Activated CD8-positive, alpha-beta T cell treated with anti-CD3 and anti-CD28 coated beads for 36 hours (primary cell): ENCODE measurements at regions of chr1 and their contacts with region 1.

Region 1: DNA sequence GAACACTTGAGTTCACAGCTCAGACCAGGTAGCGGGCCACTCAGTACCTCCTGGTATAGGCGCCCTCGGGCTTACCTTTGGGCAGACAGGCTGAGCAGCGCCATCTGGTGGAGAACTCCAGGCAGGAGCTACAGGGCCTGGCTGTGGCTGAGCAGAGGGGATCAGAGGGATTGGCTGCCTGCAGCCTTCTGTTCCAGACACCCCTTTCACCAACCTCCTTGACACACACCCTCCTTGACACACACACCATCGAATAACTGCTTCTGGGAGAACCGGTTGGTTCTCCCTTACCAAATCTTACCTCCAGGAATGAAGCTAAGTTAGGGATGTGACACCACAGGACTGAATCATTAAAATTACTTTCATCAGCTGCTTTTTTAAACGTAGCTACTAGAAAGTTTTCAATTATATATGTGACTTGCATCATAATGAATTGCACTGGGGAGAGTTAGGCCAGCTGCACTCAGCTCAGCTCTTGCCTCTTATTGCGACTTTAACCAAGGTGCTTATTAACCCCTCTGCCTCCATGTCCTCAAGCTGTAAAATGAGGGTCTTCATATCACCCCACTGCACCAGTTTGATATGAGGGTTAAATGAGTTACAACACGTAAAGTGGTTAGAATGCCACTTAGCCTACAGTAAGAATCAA is 6.6 kb downstream of the LIN28A start:
- DNase-seq: peak; percentile 93
- ATAC-seq: peak; percentile 100
- H3K4me3 Mint-ChIP-seq: no peak overlapping the region
- H3K27ac Mint-ChIP-seq: no peak overlapping the region
- H3K4me1 Mint-ChIP-seq: no peaks in the 10 kb centered on the region
- H3K27me3 Mint-ChIP-seq: peaks cover 24% of the 10 kb centered on the region
- CTCF ChIP-seq: peak; percentile 82

Region 2: DNA sequence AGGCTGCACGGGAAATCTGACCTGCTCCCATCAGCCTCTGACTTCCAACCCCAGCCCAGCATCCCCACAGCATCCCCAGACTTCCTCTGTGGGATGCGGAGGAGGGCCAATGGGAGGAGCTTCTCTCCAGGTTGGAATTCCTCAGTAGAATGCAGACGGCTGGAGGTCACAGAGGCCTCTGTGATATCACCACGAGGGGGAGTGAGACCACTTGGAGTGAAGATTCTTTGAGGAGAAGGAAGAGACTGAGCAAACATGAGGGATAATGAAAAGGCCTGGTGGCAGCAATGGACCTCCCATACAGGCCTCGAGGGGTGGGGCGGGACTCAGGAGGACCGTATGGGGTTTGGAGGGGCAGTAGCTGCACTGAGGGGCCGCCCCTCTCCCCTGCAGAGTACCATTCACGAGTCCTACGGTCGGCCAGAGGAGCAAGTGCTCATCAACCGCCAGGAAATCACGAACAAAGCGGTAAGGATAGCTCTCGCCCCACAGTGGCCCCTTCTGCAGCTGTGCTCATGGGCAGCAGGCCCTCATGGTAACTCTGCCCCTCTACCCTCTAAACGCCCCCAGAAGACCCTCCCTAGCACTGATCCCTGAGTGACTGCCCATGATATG is 226.8 kb before region 1 on chr1 and contains the start of gene CATSPER4:
- CTCF ChIA-PET with region 1: interaction called, 10 read pairs
- POLR2A ChIA-PET with region 1: no interaction called
- intact Hi-C with region 1: no loop called
- DNase-seq: no peak
- ATAC-seq: no peak
- H3K4me3 Mint-ChIP-seq: no peak within 1 kb of the TSS
- H3K27ac Mint-ChIP-seq: peak within 1 kb of the TSS; percentile 19
- H3K4me1 Mint-ChIP-seq: peaks cover 6% of the 10 kb centered on the region
- H3K27me3 Mint-ChIP-seq: no peaks in the 10 kb centered on the region
- CTCF ChIP-seq: no peak
- total RNA-seq, gene CATSPER4: not detected

Region 3: DNA sequence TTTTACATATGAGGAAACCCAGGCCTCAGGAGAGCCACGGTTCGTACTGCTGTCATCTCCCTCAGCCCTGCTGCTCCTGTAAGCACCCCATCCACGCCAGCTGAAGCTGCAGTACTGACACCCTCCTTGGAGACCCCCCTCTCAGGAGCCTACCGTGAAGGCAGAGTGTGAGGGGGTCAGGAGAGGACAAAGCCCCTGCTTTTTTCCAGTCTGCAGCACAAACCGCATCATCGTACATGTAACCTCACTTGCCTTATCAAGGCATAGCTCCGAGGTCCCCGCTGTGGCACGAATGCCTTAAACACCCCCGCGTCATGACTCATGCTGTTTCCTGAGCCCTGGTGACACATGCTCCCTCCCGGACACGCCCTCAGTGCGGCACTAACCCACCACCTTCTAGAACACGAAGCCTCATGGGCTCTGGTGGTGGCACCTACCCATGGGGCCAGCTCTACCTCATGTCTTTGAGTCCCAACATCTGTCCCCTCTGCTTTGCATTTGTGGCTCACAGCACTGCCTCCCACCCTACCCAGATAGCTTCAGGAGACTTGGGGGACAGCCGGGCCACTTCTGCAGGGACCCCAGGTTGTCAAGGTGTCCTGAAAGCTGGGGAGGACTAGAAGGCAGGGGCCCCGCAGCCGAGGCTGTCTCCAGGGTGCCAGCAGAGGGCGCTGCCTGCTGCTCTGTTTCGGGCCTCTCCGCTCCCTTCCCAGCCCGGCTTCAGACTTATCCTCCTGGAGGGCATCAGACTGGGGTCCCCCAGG is 132.5 kb before region 1 on chr1:
- CTCF ChIA-PET with region 1: interaction called, 18 read pairs
- POLR2A ChIA-PET with region 1: no interaction called
- intact Hi-C with region 1: no loop called
- DNase-seq: peak; percentile 100
- ATAC-seq: peak; percentile 61
- H3K4me3 Mint-ChIP-seq: peak overlapping the region; percentile 88
- H3K27ac Mint-ChIP-seq: peak overlapping the region; percentile 99
- H3K4me1 Mint-ChIP-seq: peaks cover 85% of the 10 kb centered on the region
- H3K27me3 Mint-ChIP-seq: no peaks in the 10 kb centered on the region
- CTCF ChIP-seq: peak; percentile 72

Region 4: DNA sequence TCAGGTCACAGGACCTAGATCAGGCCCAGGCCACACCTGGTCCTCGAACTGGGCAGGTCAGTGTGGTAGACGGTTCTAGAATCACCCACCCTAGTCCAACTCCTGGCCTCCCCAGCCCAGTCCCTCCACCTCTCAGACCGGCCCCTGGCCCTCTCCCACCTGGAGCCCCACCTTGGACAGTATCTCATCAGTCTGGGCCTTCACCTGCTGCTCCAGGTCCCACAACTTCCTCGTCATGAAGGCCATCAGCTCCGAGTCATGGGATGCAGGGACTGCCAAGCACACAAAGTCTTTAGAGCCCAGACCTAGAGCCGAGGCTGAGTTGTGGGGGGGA is 119.5 kb before region 1 on chr1:
- CTCF ChIA-PET with region 1: no interaction called
- POLR2A ChIA-PET with region 1: no interaction called
- intact Hi-C with region 1: no loop called
- DNase-seq: no peak
- ATAC-seq: no peak
- H3K4me3 Mint-ChIP-seq: no peak overlapping the region
- H3K27ac Mint-ChIP-seq: no peak overlapping the region
- H3K4me1 Mint-ChIP-seq: peaks cover 3% of the 10 kb centered on the region
- H3K27me3 Mint-ChIP-seq: no peaks in the 10 kb centered on the region
- CTCF ChIP-seq: no peak

Region 5: DNA sequence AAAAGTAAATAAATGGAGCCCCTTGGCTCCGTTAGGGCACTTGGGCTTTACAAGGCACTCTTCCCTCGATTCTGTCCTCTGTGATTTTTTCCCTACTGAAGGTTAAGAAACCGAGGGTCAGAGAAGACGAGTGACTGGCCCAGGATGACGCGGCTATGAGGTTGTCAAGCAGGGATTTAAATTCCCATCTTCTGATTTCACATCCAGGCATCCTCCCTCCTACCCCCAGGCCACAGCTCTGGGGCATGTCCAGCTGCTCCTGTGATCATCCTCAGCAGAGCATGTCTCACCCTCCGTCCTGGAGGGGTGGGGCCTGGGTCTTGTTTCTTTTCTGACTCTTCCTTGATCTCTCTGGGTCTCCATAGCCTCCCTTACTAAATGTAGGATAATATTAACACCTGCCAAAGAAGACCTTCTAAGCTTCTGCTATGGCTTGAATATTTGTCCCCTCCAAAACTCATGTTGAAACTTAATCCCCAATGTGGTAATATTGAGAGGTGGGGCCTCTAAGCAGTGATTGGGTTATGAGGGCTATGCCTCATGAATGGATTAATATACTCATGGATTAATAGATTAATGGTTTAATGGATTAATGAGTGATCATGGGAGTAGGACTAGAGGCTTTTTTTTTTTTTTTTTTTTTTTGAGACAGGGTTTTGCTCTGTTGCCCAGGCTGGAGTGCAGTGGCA is 67.9 kb before region 1 on chr1:
- CTCF ChIA-PET with region 1: interaction called, 19 read pairs
- POLR2A ChIA-PET with region 1: interaction called, 3 read pairs
- intact Hi-C with region 1: no loop called
- DNase-seq: no peak
- ATAC-seq: no peak
- H3K4me3 Mint-ChIP-seq: no peak overlapping the region
- H3K27ac Mint-ChIP-seq: no peak overlapping the region
- H3K4me1 Mint-ChIP-seq: no peaks in the 10 kb centered on the region
- H3K27me3 Mint-ChIP-seq: no peaks in the 10 kb centered on the region
- CTCF ChIP-seq: no peak

Region 6: DNA sequence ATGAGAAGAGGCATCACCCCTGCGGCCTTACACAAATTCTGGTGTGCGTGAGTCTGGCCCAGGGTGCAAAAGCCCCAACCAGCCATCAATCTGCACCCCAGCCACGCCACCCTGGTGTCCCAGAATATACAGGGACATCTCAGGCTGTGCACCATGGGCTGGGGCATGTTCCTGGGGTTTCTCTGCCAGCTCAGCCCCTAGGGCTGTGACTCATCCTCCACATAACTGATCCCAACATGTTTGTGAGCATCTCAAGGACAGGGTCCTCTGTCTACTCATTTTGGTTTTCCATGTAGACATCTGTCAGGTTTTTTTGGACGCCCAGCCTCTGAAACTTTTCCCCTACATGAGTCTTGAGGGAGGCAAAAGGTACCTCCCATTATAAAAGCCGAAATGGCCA is 45.2 kb before region 1 on chr1:
- CTCF ChIA-PET with region 1: interaction called, 24 read pairs
- POLR2A ChIA-PET with region 1: interaction called, 3 read pairs
- intact Hi-C with region 1: no loop called
- DNase-seq: peak; percentile 31
- ATAC-seq: no peak
- H3K4me3 Mint-ChIP-seq: no peak overlapping the region
- H3K27ac Mint-ChIP-seq: peak overlapping the region; percentile 4
- H3K4me1 Mint-ChIP-seq: peaks cover 72% of the 10 kb centered on the region
- H3K27me3 Mint-ChIP-seq: no peaks in the 10 kb centered on the region
- CTCF ChIP-seq: no peak

Region 7: GRCh38 chr1:26401891-26402290 is 15.3 kb before region 1 on chr1:
- CTCF ChIA-PET with region 1: interaction called, 31 read pairs
- POLR2A ChIA-PET with region 1: no interaction called
- intact Hi-C with region 1: no loop called
- DNase-seq: no peak
- ATAC-seq: no peak
- H3K4me3 Mint-ChIP-seq: no peak overlapping the region
- H3K27ac Mint-ChIP-seq: no peak overlapping the region
- H3K4me1 Mint-ChIP-seq: no peaks in the 10 kb centered on the region
- H3K27me3 Mint-ChIP-seq: peaks cover 13% of the 10 kb centered on the region
- CTCF ChIP-seq: no peak

Region 8: DNA sequence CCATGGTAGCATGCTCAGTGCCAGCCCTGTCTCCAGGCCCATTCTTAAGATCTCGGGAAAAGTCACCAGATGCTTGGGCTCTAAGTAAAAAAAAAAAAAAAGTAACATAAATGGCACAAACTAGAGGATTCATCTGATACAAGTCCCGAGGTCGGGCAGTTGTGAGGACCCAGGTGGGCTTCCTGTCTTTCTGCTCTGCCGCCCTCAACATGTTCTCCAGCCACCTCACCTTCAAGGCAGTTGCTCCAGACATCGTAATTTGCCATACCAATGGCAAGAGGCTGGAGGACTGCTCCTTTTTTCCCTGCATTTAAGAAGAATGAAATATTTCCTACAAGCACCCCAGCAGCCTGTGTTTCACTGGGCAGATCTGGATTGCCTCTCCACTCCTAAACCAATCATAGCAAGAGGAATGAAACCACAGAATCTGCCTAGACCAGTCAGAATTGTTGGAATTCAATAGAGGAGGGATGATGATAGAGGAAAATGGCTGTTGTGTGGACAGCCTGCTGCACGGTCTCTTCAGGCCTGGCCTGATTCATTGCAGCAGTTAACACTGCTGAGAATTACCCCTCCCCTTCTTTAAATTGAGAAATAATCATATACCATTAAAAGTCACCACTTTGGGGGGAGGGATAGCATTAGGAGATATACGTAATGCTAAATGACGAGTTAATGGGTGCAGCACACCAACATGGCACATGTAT is 60.4 kb after region 1 on chr1:
- CTCF ChIA-PET with region 1: no interaction called
- POLR2A ChIA-PET with region 1: no interaction called
- intact Hi-C with region 1: no loop called
- DNase-seq: no peak
- ATAC-seq: no peak
- H3K4me3 Mint-ChIP-seq: no peak overlapping the region
- H3K27ac Mint-ChIP-seq: peak overlapping the region; percentile 21
- H3K4me1 Mint-ChIP-seq: peaks cover 33% of the 10 kb centered on the region
- H3K27me3 Mint-ChIP-seq: no peaks in the 10 kb centered on the region
- CTCF ChIP-seq: no peak

Region 9: DNA sequence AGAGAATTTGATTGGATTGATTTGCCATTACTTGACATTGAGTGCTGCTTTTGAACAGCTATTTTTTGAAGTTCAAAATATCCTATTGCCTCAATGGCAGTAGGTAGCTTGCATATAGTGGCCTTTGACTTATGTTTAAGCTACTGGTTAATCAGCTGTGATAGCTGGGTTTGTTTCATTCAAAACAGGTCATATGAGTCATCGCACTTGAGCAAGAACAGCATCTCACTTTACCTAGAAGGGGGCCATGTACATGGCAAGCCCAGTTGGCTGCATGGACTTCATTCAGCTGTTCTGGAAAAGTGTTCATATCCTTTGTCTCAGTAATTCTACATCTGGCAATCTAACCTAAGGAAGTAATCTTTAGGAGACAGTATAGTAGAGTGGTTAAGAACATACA is 249.6 kb after region 1 on chr1:
- CTCF ChIA-PET with region 1: no interaction called
- POLR2A ChIA-PET with region 1: no interaction called
- intact Hi-C with region 1: no loop called
- DNase-seq: peak; percentile 26
- ATAC-seq: peak; percentile 86
- H3K4me3 Mint-ChIP-seq: no peak overlapping the region
- H3K27ac Mint-ChIP-seq: no peak overlapping the region
- H3K4me1 Mint-ChIP-seq: peaks cover 11% of the 10 kb centered on the region
- H3K27me3 Mint-ChIP-seq: no peaks in the 10 kb centered on the region
- CTCF ChIP-seq: no peak